Calu3 (cell line): ENCODE measurements at regions of chr12 and their contacts with region 1.

Region 1: DNA sequence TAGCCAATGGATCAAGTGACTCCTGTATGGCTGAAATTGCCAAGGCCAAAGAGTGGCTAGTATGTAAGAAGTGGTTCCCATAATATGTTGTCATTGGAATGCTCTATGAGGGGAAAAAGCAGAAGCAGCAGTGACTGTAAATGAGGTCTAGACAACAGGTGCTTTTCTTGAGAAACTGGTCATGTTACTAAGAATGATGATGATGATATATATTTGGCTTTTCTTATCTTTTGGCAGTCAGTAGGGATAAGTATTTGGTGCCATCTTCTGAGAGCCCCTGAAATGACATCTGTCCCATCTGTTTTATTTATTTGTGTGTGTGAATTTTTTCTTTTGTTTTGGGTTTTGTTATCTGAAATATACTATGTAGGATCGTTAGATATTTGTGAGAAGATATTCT is 141.7 kb downstream of the SYT1 start:
- DNase-seq: no peak
- H3K4me3 Mint-ChIP-seq: no peak overlapping the region
- H3K27ac Mint-ChIP-seq: no peak overlapping the region
- H3K4me1 Mint-ChIP-seq: no peaks in the 10 kb centered on the region
- H3K27me3 Mint-ChIP-seq: no peaks in the 10 kb centered on the region
- CTCF ChIP-seq: no peak

Region 2: GRCh38 chr12:78562368-78563205 is 443.7 kb before region 1 on chr12:
- CTCF ChIA-PET with region 1: no interaction called
- intact Hi-C with region 1: loop called (anchors 1 kb)
- DNase-seq: no peak
- H3K4me3 Mint-ChIP-seq: no peak overlapping the region
- H3K27ac Mint-ChIP-seq: no peak overlapping the region
- H3K4me1 Mint-ChIP-seq: peaks cover 18% of the 10 kb centered on the region
- H3K27me3 Mint-ChIP-seq: no peaks in the 10 kb centered on the region
- CTCF ChIP-seq: peak; percentile 28